MCF 10A (cell line): ENCODE measurements at regions of chr15 and their contacts with region 1.

Region 1: DNA sequence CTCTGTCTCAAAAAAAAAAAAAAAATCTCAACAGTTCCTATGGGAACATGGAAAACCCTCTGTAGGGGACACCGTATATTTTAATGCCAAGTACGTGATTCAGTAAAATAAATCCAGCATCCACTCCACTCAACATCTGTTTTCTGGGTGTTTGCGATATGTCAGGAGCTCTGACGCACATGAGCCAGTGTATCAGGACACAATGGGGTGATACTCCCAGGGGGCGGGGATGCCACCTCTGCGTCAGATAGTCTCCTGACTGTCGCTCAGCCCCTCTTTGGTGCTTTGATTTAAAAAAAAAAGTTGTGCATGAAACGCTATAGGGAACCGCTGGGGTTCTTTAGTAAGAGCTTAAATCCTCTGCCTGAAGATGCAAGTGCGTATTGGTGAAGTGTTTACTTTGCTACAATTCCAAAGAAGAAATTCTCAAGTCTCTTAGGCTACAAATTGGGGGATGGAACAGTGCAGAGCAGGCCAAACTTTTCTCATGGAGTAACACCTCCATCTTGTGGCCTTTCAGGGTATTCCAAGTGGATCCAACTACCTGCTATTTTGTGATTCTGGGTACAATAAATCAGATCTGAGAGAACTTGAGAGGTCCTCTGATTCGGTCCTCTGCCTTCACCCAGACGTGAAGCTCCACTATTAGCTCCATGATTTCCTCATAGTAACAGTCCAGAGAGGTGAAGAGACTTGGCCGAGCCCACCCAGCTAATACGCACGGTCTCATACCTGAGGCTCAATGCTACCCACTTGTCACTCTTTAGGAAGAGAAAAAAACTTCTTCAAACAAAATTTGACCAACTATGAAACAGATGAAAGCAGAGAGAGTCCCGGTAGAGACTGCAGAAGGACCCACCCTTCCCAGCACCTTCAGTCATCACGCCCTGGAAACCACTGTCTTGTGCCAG is 9.3 kb upstream of the NR2E3 start:
- DNase-seq: peak; percentile 77
- H3K4me3 Mint-ChIP-seq: no peak overlapping the region
- H3K27ac Mint-ChIP-seq: no peak overlapping the region
- H3K4me1 Mint-ChIP-seq: peaks cover 6% of the 10 kb centered on the region
- H3K27me3 Mint-ChIP-seq: no peaks in the 10 kb centered on the region
- CTCF ChIP-seq: peak; percentile 93

Region 2: GRCh38 chr15:70892002-70892914 is 908.8 kb before region 1 on chr15 and contains the starts of genes LRRC49 and THAP10:
- CTCF ChIA-PET with region 1: interaction called, 3 read pairs
- POLR2A ChIA-PET with region 1: no interaction called
- intact Hi-C with region 1: loop called (anchors 5 kb)
- DNase-seq: peak; percentile 90
- H3K4me3 Mint-ChIP-seq: peak within 1 kb of the TSS; percentile 87
- H3K27ac Mint-ChIP-seq: peak within 1 kb of the TSS; percentile 53
- H3K4me1 Mint-ChIP-seq: peaks cover 17% of the 10 kb centered on the region
- H3K27me3 Mint-ChIP-seq: no peaks in the 10 kb centered on the region
- CTCF ChIP-seq: no peak
- total RNA-seq, gene LRRC49: 6.9 and 8.4 TPM in 2 replicates
- total RNA-seq, gene THAP10: 4.0 and 5.7 TPM in 2 replicates

Region 3: DNA sequence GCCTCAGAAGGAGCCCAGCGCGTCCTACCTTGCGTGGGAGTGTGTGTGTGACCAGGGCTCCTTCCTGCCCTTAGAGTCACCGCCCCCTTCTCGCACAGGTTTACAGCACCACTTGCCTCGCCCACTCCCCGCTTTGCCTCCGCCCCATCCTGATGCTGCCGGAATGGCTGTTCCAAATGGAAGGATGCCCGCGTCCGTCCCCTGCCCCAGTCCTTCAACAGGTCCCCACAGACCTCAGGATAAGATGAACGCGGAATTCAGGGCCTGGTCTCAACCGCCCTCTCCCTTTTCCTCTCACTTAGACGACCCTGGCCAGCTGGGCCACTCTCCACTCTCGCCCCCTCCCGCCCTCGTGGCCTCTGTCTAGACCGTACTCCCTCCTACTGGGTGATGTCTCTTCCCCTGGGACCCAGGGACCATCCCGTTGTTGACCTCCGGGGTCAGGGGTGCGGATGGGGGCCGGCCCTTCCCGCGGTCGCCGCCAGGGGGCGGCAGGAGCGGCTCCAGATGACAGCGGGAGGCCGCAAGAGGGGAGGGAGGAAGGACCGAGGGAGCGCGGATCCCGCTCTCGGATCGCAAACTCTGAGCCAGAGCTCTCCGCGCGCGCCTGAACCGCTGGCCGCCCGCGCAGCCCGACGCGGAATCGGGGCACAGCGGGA is 686.1 kb before region 1 on chr15 and contains the start of gene THSD4:
- CTCF ChIA-PET with region 1: interaction called, 3 read pairs
- POLR2A ChIA-PET with region 1: no interaction called
- intact Hi-C with region 1: loop called (anchors 10 kb)
- DNase-seq: peak; percentile 76
- H3K4me3 Mint-ChIP-seq: peak within 1 kb of the TSS; percentile 65
- H3K27ac Mint-ChIP-seq: peak within 1 kb of the TSS; percentile 40
- H3K4me1 Mint-ChIP-seq: peaks cover 36% of the 10 kb centered on the region
- H3K27me3 Mint-ChIP-seq: no peaks in the 10 kb centered on the region
- CTCF ChIP-seq: peak; percentile 97
- total RNA-seq, gene THSD4: 36.3 and 38.2 TPM in 2 replicates

Region 4: DNA sequence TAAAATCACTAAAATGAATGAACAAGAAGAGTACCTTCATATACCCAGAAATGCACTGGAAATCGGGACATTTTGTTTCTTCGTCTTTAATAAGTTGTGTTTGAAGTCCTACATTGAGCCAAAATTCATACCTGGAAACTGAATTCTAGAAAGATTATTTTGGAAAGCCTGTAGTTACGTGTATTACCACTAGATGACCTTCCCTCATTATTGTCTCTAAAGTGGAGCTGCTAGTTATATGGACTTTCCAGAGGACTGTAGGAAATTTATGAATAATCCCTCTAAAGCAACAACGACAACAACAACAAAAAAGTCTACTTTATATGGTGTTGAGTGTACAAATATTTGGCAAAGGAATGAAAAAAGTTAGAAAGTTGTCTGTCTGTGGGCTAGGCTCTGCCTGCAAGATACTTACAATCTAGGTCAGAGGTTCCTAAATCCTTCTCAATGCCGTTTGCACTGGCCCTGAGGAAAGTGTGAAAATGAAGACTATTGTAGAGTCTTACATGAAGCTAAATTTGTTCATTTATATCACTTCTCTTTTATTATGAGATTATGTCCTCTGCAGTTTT is 225.5 kb before region 1 on chr15:
- CTCF ChIA-PET with region 1: interaction called, 11 read pairs
- POLR2A ChIA-PET with region 1: no interaction called
- intact Hi-C with region 1: no loop called
- DNase-seq: peak; percentile 23
- H3K4me3 Mint-ChIP-seq: no peak overlapping the region
- H3K27ac Mint-ChIP-seq: no peak overlapping the region
- H3K4me1 Mint-ChIP-seq: peaks cover 19% of the 10 kb centered on the region
- H3K27me3 Mint-ChIP-seq: no peaks in the 10 kb centered on the region
- CTCF ChIP-seq: peak; percentile 44

Region 5: GRCh38 chr15:71743861-71744382 is 57.2 kb before region 1 on chr15:
- CTCF ChIA-PET with region 1: interaction called, 149 read pairs
- POLR2A ChIA-PET with region 1: interaction called, 6 read pairs
- intact Hi-C with region 1: loop called (anchors 1 kb)
- DNase-seq: peak; percentile 72
- H3K4me3 Mint-ChIP-seq: no peak overlapping the region
- H3K27ac Mint-ChIP-seq: no peak overlapping the region
- H3K4me1 Mint-ChIP-seq: peaks cover 19% of the 10 kb centered on the region
- H3K27me3 Mint-ChIP-seq: no peaks in the 10 kb centered on the region
- CTCF ChIP-seq: peak; percentile 56

Region 6: DNA sequence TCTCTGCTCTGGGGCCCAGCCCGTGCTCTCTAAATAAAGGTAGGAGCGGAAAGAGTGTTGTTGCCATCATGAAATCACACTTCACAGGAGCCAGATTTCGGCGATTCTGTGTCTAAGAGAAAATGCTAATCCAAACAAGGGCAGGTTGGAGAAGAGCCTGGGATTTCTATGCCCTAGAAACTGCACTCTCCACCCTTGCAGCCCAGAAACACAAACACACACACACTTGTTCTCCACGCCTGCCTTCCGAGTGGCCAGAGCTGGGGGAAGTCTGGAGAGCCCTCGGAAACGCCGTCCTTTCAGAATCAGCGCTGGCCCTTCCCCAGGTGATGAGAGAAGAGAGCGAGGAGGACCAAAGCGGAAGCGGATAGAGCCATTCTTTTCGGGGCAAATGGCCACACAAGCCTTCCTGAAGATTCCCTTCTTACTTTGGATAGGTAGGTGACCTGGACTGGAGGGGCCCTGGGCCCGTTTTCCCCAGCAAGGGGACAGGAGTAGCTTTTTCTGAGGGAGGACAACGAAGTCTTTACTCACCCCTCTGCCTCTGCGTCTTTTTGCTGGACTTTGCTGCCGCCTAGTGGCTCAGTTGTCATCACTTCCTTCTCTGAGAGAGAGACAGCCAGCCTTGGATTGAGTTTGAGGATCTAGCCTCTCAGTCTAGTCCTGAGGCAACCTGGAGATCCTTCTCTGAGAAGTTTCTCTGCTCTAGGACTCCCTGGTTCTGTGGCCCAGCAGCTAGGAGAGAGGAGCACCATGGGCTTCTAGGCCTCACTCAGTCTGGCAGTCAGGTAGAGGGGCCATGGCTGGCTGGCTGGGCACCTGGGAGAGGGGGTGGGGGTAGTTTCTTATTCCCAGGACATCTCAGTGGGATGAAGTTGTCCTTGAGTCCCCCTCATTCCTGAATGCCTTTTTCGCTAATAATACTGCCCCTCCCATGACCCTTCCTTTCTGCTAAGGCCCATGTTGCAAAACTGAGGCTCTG is 354.8 kb after region 1 on chr15:
- CTCF ChIA-PET with region 1: interaction called, 8 read pairs
- POLR2A ChIA-PET with region 1: interaction called, 3 read pairs
- intact Hi-C with region 1: loop called (anchors 5 kb)
- DNase-seq: peak; percentile 89
- H3K4me3 Mint-ChIP-seq: peak overlapping the region; percentile 71
- H3K27ac Mint-ChIP-seq: peak overlapping the region; percentile 53
- H3K4me1 Mint-ChIP-seq: peaks cover 21% of the 10 kb centered on the region
- H3K27me3 Mint-ChIP-seq: no peaks in the 10 kb centered on the region
- CTCF ChIP-seq: peak; percentile 82